Sigmoid colon (tissue), 7 donors: ENCODE measurements at regions of chr10 and their contacts with region 1.

Region 1: DNA sequence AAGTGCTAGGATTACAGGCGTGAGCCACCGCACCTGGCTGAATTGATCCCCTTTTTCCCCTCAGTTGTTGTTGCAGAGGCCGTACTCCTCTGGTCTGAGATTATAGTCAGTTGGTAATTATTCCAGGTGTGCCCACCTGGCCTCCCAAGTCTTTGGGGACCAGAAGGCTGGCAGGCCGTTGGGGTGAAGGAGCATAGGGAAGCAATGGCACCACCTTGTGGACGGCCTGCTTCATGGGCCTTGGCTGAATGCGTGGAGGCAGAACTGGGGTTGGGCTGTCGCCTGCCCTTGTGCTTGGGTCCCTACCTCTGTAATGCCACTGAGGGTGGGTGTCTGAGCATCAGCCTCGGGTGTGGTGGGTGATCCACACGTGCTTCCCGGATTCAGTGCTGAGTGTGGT is 125.7 kb downstream of the RGS10 start:
- DNase-seq: peak; percentile 80
- H3K4me3 ChIP-seq: no peak overlapping the region
- H3K27ac ChIP-seq: peak overlapping the region in 1 of 4 donors; percentile 23
- H3K4me1 ChIP-seq: peaks cover 0 to 38% (median 28%) of the 10 kb centered on the region in 4 donors
- H3K27me3 ChIP-seq: no peaks in the 10 kb centered on the region
- CTCF ChIP-seq: peak; percentile 68 to 80 (median 73)
- EP300 ChIP-seq: no peak
- POLR2A ChIP-seq: no peak

Region 2: GRCh38 chr10:119199231-119199992 is 217.4 kb before region 1 on chr10:
- intact Hi-C with region 1: loop called (anchors 1 kb)
- DNase-seq: peak; percentile 88
- H3K4me3 ChIP-seq: no peak overlapping the region
- H3K27ac ChIP-seq: no peak overlapping the region
- H3K4me1 ChIP-seq: peaks cover 0 to 3% (median 0%) of the 10 kb centered on the region in 4 donors
- H3K27me3 ChIP-seq: no peaks in the 10 kb centered on the region
- CTCF ChIP-seq: peak; percentile 68 to 83 (median 78)
- EP300 ChIP-seq: no peak
- POLR2A ChIP-seq: no peak

Region 3: DNA sequence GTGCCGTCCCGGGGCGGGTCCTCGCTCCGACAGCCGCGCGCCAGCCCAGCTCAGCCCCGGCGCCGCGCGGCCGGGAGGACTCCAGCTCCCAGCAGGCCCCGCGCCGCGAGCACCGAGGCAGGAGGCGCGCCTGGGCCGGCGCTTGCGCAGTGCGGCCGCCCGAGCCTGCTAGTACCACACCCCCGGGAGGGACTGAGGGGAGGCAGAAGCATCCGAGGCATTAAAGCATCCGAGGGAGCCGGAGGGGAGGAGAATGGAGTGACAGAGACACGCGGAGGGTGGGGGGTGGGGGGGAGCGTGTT is 209.5 kb before region 1 on chr10 and contains the start of gene GRK5:
- intact Hi-C with region 1: loop called (anchors 1 kb)
- DNase-seq: peak; percentile 98
- H3K4me3 ChIP-seq: peak within 1 kb of the TSS; percentile 60 to 87 (median 69)
- H3K27ac ChIP-seq: peak within 1 kb of the TSS; percentile 92 to 100 (median 98)
- H3K4me1 ChIP-seq: peaks cover 0 to 50% (median 43%) of the 10 kb centered on the region in 4 donors
- H3K27me3 ChIP-seq: no peaks in the 10 kb centered on the region
- CTCF ChIP-seq: no peak
- EP300 ChIP-seq: no peak
- POLR2A ChIP-seq: no peak
- total RNA-seq, gene GRK5: 19.8 to 32.4 (median 22.2) TPM

Region 4: DNA sequence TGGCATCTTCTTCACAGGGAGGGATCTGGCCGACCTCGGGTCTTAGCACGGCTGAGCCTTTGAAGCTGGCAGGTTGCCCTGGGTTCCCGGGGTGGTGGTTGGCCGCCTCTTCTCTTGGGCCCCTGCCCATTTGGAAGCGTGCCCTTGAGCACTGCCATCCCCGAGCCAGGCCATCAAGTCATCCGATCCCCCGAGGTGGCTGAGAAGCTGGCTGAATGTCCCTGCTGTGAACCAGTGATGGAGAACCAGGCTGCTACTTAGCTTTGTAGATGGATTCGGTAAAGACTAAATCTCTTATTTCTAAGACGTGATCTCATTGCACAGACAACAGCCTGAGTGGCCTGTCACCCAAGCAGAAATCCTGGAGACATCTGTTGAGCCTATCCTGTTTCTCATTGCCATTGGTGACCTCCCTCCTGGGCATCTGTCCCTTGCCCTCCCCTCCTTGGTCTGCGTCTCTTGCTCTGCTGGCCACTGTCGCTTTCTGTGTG is 135.2 kb before region 1 on chr10:
- intact Hi-C with region 1: loop called (anchors 5 kb)
- DNase-seq: peak; percentile 92
- H3K4me3 ChIP-seq: no peak overlapping the region
- H3K27ac ChIP-seq: peak overlapping the region; percentile 57 to 68 (median 60)
- H3K4me1 ChIP-seq: peaks cover 0 to 68% (median 61%) of the 10 kb centered on the region in 4 donors
- H3K27me3 ChIP-seq: no peaks in the 10 kb centered on the region
- CTCF ChIP-seq: no peak
- EP300 ChIP-seq: no peak
- POLR2A ChIP-seq: no peak

Region 5: GRCh38 chr10:119305860-119306513 is 110.9 kb before region 1 on chr10:
- intact Hi-C with region 1: loop called (anchors 5 kb)
- DNase-seq: peak; percentile 95
- H3K4me3 ChIP-seq: no peak overlapping the region
- H3K27ac ChIP-seq: peak overlapping the region; percentile 73 to 92 (median 79)
- H3K4me1 ChIP-seq: peaks cover 0 to 91% (median 71%) of the 10 kb centered on the region in 4 donors
- H3K27me3 ChIP-seq: no peaks in the 10 kb centered on the region
- CTCF ChIP-seq: no peak
- EP300 ChIP-seq: peak in 1 of 4 donors; percentile 81
- POLR2A ChIP-seq: no peak

Region 6: DNA sequence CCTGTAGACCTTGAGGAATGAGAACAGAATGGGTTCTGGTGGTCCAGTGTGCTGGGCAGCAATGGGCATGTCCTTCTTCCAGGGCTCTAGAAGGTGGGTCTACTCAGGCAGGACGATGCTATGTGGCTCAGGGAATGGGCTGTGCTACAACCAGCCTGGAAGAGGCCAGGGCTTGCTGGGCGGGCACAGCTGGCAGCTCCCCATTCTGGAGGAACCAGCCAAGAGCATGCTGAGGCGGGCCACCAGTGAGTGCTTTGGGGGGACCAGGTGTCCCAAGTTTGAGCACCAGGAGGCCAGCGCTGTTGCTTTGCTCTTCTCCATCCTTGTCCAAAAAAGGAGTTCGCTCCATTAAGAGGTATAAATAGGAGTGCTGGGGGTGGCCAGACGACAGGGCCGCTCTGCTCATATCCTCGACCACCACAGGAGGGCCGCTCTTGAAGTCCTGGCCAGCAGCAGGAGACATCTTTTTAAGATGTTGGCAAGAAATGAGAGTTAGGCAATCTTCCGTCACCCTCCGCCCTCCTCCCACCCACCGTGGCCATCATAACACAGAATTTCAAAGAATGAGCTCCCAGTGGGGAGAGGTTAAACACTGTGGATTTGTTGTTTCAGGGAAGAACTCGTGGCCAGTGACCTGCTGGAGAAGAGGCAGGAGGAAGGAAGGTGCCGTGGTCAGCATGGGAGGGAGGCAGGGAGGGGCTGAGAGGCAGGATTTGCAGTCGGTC is 68.2 kb before region 1 on chr10:
- intact Hi-C with region 1: loop called (anchors 5 kb)
- DNase-seq: peak; percentile 77
- H3K4me3 ChIP-seq: no peak overlapping the region
- H3K27ac ChIP-seq: peak overlapping the region; percentile 24 to 71 (median 57)
- H3K4me1 ChIP-seq: peaks cover 0 to 51% (median 44%) of the 10 kb centered on the region in 4 donors
- H3K27me3 ChIP-seq: no peaks in the 10 kb centered on the region
- CTCF ChIP-seq: no peak
- EP300 ChIP-seq: no peak
- POLR2A ChIP-seq: no peak

Region 7: DNA sequence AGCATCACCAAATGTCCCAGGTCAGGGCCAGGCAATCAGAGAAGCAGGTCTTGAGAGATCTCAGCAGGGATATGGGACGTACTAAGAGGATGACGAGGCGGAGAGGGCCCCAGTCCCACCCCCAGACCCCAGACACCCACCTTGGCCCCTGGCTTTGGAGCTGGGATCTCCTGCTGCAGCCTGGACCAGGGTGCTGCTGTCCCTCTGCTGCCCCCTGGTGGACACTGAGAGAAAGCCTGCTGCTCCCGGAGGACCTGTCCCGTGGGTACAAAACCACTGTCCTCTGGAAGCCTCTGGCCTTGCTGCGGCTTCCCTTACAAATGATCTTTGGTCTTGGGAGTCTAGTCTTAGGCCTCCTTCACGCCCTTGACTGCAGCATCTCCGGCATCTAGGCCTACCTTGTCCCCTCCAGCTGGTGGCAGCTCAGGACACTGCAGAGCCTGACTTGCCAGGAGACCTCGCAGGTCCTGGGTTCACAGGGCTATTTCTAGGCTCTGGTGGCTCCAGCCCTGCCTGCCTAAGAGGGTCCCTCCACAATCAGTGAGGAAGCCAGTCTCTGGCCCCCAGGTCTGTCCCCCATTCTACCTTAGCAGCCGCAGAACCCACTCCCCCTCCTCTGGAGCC is 28.6 kb after region 1 on chr10:
- intact Hi-C with region 1: loop called (anchors 2 kb)
- DNase-seq: peak; percentile 93
- H3K4me3 ChIP-seq: no peak overlapping the region
- H3K27ac ChIP-seq: no peak overlapping the region
- H3K4me1 ChIP-seq: peaks cover 0 to 41% (median 27%) of the 10 kb centered on the region in 4 donors
- H3K27me3 ChIP-seq: no peaks in the 10 kb centered on the region
- CTCF ChIP-seq: peak; percentile 77 to 99 (median 90)
- EP300 ChIP-seq: no peak
- POLR2A ChIP-seq: no peak